Heart left ventricle (tissue), 16 donors: ENCODE measurements at regions of chr9 and their contacts with region 1.

Region 1: GRCh38 chr9:74218385-74219063 is 278.6 kb upstream of the RORB start:
- DNase-seq: no peak
- ATAC-seq: no peak
- H3K4me3 ChIP-seq: no peak overlapping the region
- H3K27ac ChIP-seq: no peak overlapping the region
- H3K4me1 ChIP-seq: no peaks in the 10 kb centered on the region
- H3K27me3 ChIP-seq: no peaks in the 10 kb centered on the region
- CTCF ChIP-seq: no peak
- POLR2A ChIP-seq: no peak

Region 2: GRCh38 chr9:74277532-74277931 is 59.0 kb after region 1 on chr9:
- intact Hi-C with region 1: loop called in 2 of 10 experiments (anchors 10 kb)
- DNase-seq: no peak
- ATAC-seq: no peak
- H3K4me3 ChIP-seq: no peak overlapping the region
- H3K27ac ChIP-seq: no peak overlapping the region
- H3K4me1 ChIP-seq: no peaks in the 10 kb centered on the region
- H3K27me3 ChIP-seq: no peaks in the 10 kb centered on the region
- CTCF ChIP-seq: no peak
- POLR2A ChIP-seq: no peak

Region 3: GRCh38 chr9:74304598-74304997 is 86.1 kb after region 1 on chr9:
- intact Hi-C with region 1: no loop called
- DNase-seq: no peak
- ATAC-seq: no peak
- H3K4me3 ChIP-seq: no peak overlapping the region
- H3K27ac ChIP-seq: no peak overlapping the region
- H3K4me1 ChIP-seq: no peaks in the 10 kb centered on the region
- H3K27me3 ChIP-seq: no peaks in the 10 kb centered on the region
- CTCF ChIP-seq: no peak
- POLR2A ChIP-seq: no peak